IMR-90 (cell line): ENCODE measurements at regions of chr10 and their contacts with region 1.

Region 1: GRCh38 chr10:66390926-66391325 is 534.9 kb upstream of the LRRTM3 start:
- DNase-seq: no peak
- ATAC-seq: no peak
- H3K4me3 ChIP-seq: no peak overlapping the region
- H3K27ac ChIP-seq: no peak overlapping the region
- H3K4me1 ChIP-seq: no peaks in the 10 kb centered on the region
- H3K27me3 ChIP-seq: no peaks in the 10 kb centered on the region
- CTCF ChIP-seq: no peak
- POLR2A ChIP-seq: no peak
- RAD21 ChIP-seq: no peak

Region 2: DNA sequence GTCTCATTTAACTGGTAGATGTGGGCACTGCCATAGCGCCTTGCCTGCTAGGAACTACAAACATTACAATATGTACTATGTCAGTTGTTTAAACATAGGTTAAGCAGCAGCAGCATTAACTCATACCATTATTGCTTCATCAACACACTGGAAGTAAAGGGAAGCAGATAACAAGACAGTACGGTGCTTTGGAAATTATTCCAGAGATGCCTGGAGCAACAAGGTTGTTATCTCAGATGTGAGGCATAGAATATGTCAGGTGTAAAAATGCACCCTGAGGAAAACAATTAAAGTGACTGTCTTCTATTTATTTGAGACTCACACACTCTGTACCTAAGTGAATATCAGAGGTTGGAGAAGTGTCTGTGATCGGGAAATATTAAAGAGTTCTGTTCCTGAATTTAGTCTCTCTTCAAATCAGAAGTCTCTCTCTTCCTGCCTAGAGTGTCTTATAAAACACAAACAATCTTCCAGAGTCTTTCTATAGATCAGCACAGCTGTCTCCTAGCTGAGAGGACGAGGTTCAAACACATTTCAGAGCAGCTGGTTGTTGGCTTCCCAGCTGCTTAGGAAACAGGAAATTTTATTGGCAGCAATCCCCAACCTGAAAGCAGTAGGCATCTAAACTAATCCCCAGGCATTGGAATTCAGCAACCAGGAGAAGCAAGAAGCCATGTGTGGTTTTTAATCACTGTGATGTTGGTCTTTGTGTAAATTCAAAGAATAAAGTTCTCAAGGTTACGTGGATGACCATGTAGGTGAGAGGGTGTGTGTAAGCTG is 459.4 kb before region 1 on chr10:
- CTCF ChIA-PET with region 1: no interaction called
- POLR2A ChIA-PET with region 1: interaction called, 10 read pairs
- dilution Hi-C with region 1: no loop called
- in situ Hi-C with region 1: no loop called
- intact Hi-C with region 1: no loop called
- DNase-seq: no peak
- ATAC-seq: no peak
- H3K4me3 ChIP-seq: no peak overlapping the region
- H3K27ac ChIP-seq: no peak overlapping the region
- H3K4me1 ChIP-seq: no peaks in the 10 kb centered on the region
- H3K27me3 ChIP-seq: no peaks in the 10 kb centered on the region
- CTCF ChIP-seq: no peak
- POLR2A ChIP-seq: no peak
- RAD21 ChIP-seq: no peak

Region 3: GRCh38 chr10:66218981-66219587 is 171.8 kb before region 1 on chr10:
- CTCF ChIA-PET with region 1: no interaction called
- POLR2A ChIA-PET with region 1: no interaction called
- dilution Hi-C with region 1: no loop called
- in situ Hi-C with region 1: no loop called
- intact Hi-C with region 1: no loop called
- DNase-seq: no peak
- ATAC-seq: no peak
- H3K4me3 ChIP-seq: no peak overlapping the region
- H3K27ac ChIP-seq: no peak overlapping the region
- H3K4me1 ChIP-seq: no peaks in the 10 kb centered on the region
- H3K27me3 ChIP-seq: no peaks in the 10 kb centered on the region
- CTCF ChIP-seq: no peak
- POLR2A ChIP-seq: no peak
- RAD21 ChIP-seq: no peak

Region 4: GRCh38 chr10:66777665-66778064 is 386.7 kb after region 1 on chr10:
- CTCF ChIA-PET with region 1: no interaction called
- POLR2A ChIA-PET with region 1: no interaction called
- dilution Hi-C with region 1: no loop called
- in situ Hi-C with region 1: no loop called
- intact Hi-C with region 1: no loop called
- DNase-seq: peak; percentile 2
- ATAC-seq: no peak
- H3K4me3 ChIP-seq: no peak overlapping the region
- H3K27ac ChIP-seq: no peak overlapping the region
- H3K4me1 ChIP-seq: no peaks in the 10 kb centered on the region
- H3K27me3 ChIP-seq: no peaks in the 10 kb centered on the region
- CTCF ChIP-seq: no peak
- POLR2A ChIP-seq: no peak
- RAD21 ChIP-seq: no peak

Region 5: DNA sequence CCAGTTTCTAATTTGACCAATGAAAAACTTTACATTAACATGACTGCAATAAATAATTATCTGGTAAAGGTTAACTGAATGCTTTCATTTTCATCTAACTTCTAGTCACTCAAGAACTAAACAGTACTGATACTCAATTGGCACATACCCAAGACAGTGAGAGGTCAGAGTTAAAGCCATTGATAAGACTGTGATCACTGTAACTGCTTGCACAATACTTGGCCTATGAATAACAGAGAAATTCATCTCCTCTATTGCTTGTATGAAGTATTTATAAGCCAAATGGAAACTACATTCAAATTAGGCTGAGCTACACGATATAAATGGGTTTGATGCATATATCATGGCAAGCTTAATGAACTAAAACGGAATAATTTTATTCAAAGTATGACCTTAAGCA is 1641.2 kb after region 1 on chr10:
- CTCF ChIA-PET with region 1: no interaction called
- POLR2A ChIA-PET with region 1: no interaction called
- dilution Hi-C with region 1: no loop called
- in situ Hi-C with region 1: no loop called
- intact Hi-C with region 1: no loop called
- DNase-seq: peak; percentile 18
- ATAC-seq: no peak
- H3K4me3 ChIP-seq: no peak overlapping the region
- H3K27ac ChIP-seq: no peak overlapping the region
- H3K4me1 ChIP-seq: no peaks in the 10 kb centered on the region
- H3K27me3 ChIP-seq: no peaks in the 10 kb centered on the region
- CTCF ChIP-seq: no peak
- POLR2A ChIP-seq: no peak
- RAD21 ChIP-seq: no peak